WTC11 (cell line): ENCODE measurements at regions of chr17 and their contacts with region 1.

Region 1: GRCh38 chr17:76623271-76624146 is 20.0 kb downstream of the ST6GALNAC1 start:
- DNase-seq: peak; percentile 79
- ATAC-seq: peak; percentile 95
- H3K4me3 Mint-ChIP-seq: no peak overlapping the region
- H3K27ac Mint-ChIP-seq: no peak overlapping the region
- H3K4me1 Mint-ChIP-seq: no peaks in the 10 kb centered on the region
- H3K27me3 Mint-ChIP-seq: 0 out of 2 replicates have a peak, but pooled peaks cover 5% of the 10 kb centered on the region
- CTCF ChIP-seq: peak; percentile 89

Region 2: GRCh38 chr17:76432712-76433336 is 190.7 kb before region 1 on chr17:
- CTCF ChIA-PET with region 1: no interaction called
- POLR2A ChIA-PET with region 1: no interaction called
- DNase-seq: no peak
- ATAC-seq: peak; percentile 59
- H3K4me3 Mint-ChIP-seq: no peak overlapping the region
- H3K27ac Mint-ChIP-seq: peak overlapping the region; percentile 82; the same call in 1 of the 2 replicates
- H3K4me1 Mint-ChIP-seq: peaks cover 63% of the 10 kb centered on the region
- H3K27me3 Mint-ChIP-seq: no peaks in the 10 kb centered on the region
- CTCF ChIP-seq: peak; percentile 46

Region 3: GRCh38 chr17:76540381-76541300 is 82.9 kb before region 1 on chr17:
- CTCF ChIA-PET with region 1: interaction called, 13 read pairs
- POLR2A ChIA-PET with region 1: no interaction called
- DNase-seq: peak; percentile 95
- ATAC-seq: peak; percentile 91
- H3K4me3 Mint-ChIP-seq: peak overlapping the region; percentile 74
- H3K27ac Mint-ChIP-seq: peak overlapping the region; percentile 80
- H3K4me1 Mint-ChIP-seq: peaks cover 40% of the 10 kb centered on the region
- H3K27me3 Mint-ChIP-seq: peaks cover 43% of the 10 kb centered on the region
- CTCF ChIP-seq: no peak

Region 4: GRCh38 chr17:76557368-76558197 is 65.9 kb before region 1 on chr17:
- CTCF ChIA-PET with region 1: interaction called, 18 read pairs
- POLR2A ChIA-PET with region 1: no interaction called
- DNase-seq: peak; percentile 97
- ATAC-seq: peak; percentile 97
- H3K4me3 Mint-ChIP-seq: peak overlapping the region; percentile 97
- H3K27ac Mint-ChIP-seq: peak overlapping the region; percentile 97
- H3K4me1 Mint-ChIP-seq: peaks cover 43% of the 10 kb centered on the region
- H3K27me3 Mint-ChIP-seq: no peaks in the 10 kb centered on the region
- CTCF ChIP-seq: peak; percentile 31; the same call in 1 of the 2 replicates

Region 5: GRCh38 chr17:76578344-76578979 is 45.0 kb before region 1 on chr17:
- CTCF ChIA-PET with region 1: interaction called, 20 read pairs
- POLR2A ChIA-PET with region 1: no interaction called
- DNase-seq: no peak
- ATAC-seq: no peak
- H3K4me3 Mint-ChIP-seq: no peak overlapping the region
- H3K27ac Mint-ChIP-seq: no peak overlapping the region
- H3K4me1 Mint-ChIP-seq: peaks cover 8% of the 10 kb centered on the region
- H3K27me3 Mint-ChIP-seq: peaks cover 41% of the 10 kb centered on the region
- CTCF ChIP-seq: no peak

Region 6: GRCh38 chr17:76597728-76598474 is 25.6 kb before region 1 on chr17:
- CTCF ChIA-PET with region 1: interaction called, 26 read pairs
- POLR2A ChIA-PET with region 1: no interaction called
- DNase-seq: no peak
- ATAC-seq: no peak
- H3K4me3 Mint-ChIP-seq: no peak overlapping the region
- H3K27ac Mint-ChIP-seq: no peak overlapping the region
- H3K4me1 Mint-ChIP-seq: peaks cover 15% of the 10 kb centered on the region
- H3K27me3 Mint-ChIP-seq: no peaks in the 10 kb centered on the region; the same call in 1 of the 2 replicates
- CTCF ChIP-seq: no peak

Region 7: DNA sequence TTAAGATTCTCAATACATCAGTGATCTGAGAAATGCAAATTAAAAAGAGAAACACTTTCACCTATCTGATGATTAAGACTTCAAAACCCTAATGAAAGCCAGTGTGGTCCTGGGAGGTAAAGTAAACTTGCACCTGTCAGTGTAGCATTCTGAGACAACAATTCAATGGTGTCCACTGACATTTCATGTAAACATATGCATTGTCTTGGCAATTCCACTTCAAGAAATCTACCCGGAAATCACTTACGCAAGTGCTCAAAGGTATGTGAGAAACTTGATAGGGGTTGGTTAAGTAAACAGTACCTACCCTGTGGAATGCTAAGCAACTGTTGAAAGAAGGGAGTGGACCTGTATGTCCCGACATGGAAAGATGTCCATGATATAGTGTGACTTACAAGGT is 18.0 kb after region 1 on chr17:
- CTCF ChIA-PET with region 1: interaction called, 21 read pairs
- POLR2A ChIA-PET with region 1: no interaction called
- DNase-seq: no peak
- ATAC-seq: no peak
- H3K4me3 Mint-ChIP-seq: no peak overlapping the region
- H3K27ac Mint-ChIP-seq: no peak overlapping the region
- H3K4me1 Mint-ChIP-seq: peaks cover 14% of the 10 kb centered on the region
- H3K27me3 Mint-ChIP-seq: no peaks in the 10 kb centered on the region; the same call in 1 of the 2 replicates
- CTCF ChIP-seq: no peak